B cell (primary cell): ENCODE measurements at regions of chr1 and their contacts with region 1.

Region 1: DNA sequence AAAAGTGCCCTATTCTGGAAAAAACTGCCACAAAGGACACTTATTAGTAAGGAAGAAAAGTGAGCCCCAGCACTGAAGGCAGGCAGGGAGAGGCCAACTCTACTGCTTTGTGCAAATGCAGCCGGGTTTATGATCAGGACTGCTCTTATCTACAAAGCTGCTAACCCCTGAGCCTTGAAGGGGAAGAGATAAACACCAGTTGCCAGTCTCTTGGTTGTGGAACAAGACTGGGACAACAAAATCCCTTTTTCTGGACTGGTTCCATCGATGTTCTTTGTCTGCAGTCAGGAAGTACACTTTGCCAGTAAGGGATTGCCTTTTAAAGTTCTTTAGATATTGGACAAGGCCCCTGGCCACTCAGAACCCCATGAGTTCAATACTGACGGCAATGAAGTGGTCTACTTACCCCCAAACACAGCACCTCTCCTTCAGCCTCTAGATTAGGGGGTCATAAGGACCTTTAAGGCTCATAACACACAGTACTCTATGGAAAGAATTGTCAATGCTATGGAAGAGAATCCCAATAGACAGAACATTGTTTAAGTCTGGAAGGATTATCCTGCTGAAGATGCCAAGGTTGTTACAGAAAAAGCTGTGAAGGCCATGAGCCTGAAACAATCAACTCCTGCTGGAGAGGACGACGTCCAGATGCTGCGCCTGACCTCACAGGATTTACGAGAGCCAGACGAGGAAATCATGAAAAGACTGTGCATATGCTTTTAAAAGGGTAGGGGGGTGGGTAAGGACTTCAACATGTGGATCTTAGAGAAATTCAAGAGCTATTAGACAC is 43.6 kb downstream of the GNB1 start:
- DNase-seq: no peak
- ATAC-seq: no peak
- H3K4me3 ChIP-seq: no peak overlapping the region
- H3K4me3 Mint-ChIP-seq: peak overlapping the region; percentile 55
- H3K27ac ChIP-seq: peak overlapping the region; percentile 11 to 68
- H3K27ac Mint-ChIP-seq: peak overlapping the region; percentile 84
- H3K4me1 ChIP-seq: peaks cover 42 to 61% of the 10 kb centered on the region in 2 donors
- H3K4me1 Mint-ChIP-seq: peaks cover 68% of the 10 kb centered on the region
- H3K27me3 ChIP-seq: no peaks in the 10 kb centered on the region
- H3K27me3 Mint-ChIP-seq: no peaks in the 10 kb centered on the region
- CTCF ChIP-seq: no peak

Region 2: DNA sequence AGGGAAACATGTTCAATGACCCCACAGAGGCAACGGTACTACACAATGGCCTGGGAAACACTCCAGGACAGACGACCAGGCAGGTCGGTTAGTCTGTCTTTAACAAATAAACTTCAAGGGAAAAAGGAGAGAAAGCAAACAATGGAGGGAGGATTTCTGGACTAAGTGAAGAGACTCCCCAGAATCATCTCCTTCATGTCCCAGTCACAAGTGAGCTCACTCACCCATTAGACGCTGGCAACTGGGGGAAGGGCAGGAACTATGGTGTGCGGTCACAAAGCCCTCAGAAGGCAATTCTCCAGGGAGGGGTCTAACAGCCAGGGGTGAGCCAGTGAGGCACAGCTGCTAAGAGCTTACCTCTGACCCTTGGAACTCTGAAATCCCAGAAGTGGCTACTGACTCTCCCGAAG is 13.3 kb before region 1 on chr1:
- CTCF ChIA-PET with region 1: interaction called, 3 read pairs
- POLR2A ChIA-PET with region 1: no interaction called
- intact Hi-C with region 1: loop called (anchors 2 kb)
- DNase-seq: peak; percentile 80
- ATAC-seq: peak; percentile 91
- H3K4me3 ChIP-seq: peak overlapping the region in 4 of 5 experiments; percentile 5 to 31 (median 14)
- H3K4me3 Mint-ChIP-seq: peak overlapping the region; percentile 78
- H3K27ac ChIP-seq: peak overlapping the region; percentile 42 to 90
- H3K27ac Mint-ChIP-seq: peak overlapping the region; percentile 87
- H3K4me1 ChIP-seq: peaks cover 42 to 46% of the 10 kb centered on the region in 2 donors
- H3K4me1 Mint-ChIP-seq: peaks cover 48% of the 10 kb centered on the region
- H3K27me3 ChIP-seq: no peaks in the 10 kb centered on the region
- H3K27me3 Mint-ChIP-seq: no peaks in the 10 kb centered on the region
- CTCF ChIP-seq: no peak

Region 3: GRCh38 chr1:1862905-1863547 is 15.8 kb after region 1 on chr1:
- CTCF ChIA-PET with region 1: no interaction called
- POLR2A ChIA-PET with region 1: no interaction called
- intact Hi-C with region 1: no loop called
- DNase-seq: no peak
- ATAC-seq: no peak
- H3K4me3 ChIP-seq: no peak overlapping the region
- H3K4me3 Mint-ChIP-seq: peak overlapping the region; percentile 44
- H3K27ac ChIP-seq: peak overlapping the region; percentile 68 to 69
- H3K27ac Mint-ChIP-seq: peak overlapping the region; percentile 72
- H3K4me1 ChIP-seq: peaks cover 79 to 85% of the 10 kb centered on the region in 2 donors
- H3K4me1 Mint-ChIP-seq: peaks cover 75% of the 10 kb centered on the region
- H3K27me3 ChIP-seq: no peaks in the 10 kb centered on the region
- H3K27me3 Mint-ChIP-seq: no peaks in the 10 kb centered on the region
- CTCF ChIP-seq: no peak